Activated CD4-positive, alpha-beta memory T cell treated with anti-CD3 and anti-CD28 coated beads, Interleukin-2, amount 10 ng/mL, durations not matched to agents 7 days and 5 days (primary cell): ENCODE measurements at regions of chr11 and their contacts with region 1.

Region 1: DNA sequence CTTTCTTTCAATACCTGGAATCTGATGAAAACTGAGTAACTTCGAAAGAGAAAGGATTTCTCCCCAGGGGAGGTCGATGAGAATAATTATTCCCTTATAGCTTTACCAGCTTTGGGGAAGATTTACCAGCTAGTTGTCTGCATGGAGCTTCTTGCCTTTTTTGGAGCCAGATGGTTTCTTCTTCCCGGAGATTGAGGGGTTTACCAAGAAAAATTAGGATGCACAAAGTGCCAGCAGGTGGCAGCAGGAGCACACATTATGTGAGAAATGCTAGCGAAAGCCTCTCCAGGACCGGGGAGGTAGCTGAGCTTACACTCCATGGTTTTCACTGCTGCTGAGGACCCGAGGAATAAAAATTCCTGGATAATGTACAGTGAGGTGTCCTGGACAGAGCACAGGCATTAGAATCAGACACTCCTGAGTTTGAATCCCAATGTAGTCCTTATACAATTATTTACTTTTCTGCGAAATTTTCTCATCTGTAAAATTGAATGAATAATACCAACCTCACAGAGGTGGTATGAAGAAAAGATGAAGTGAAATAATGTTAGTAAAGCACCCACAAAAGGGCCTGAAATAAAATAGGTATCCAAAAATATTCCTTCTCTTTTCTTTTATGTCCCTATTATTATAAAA is 46.0 kb upstream of the PARVA start:
- DNase-seq: peak; percentile 76
- H3K4me3 Mint-ChIP-seq: no peak overlapping the region
- H3K27ac Mint-ChIP-seq: no peak overlapping the region
- H3K4me1 Mint-ChIP-seq: no peaks in the 10 kb centered on the region
- H3K27me3 Mint-ChIP-seq: no peaks in the 10 kb centered on the region

Region 2: GRCh38 chr11:12306830-12307229 is 24.5 kb before region 1 on chr11:
- CTCF ChIA-PET with region 1: no interaction called
- POLR2A ChIA-PET with region 1: no interaction called
- DNase-seq: no peak
- H3K4me3 Mint-ChIP-seq: no peak overlapping the region
- H3K27ac Mint-ChIP-seq: no peak overlapping the region
- H3K4me1 Mint-ChIP-seq: no peaks in the 10 kb centered on the region
- H3K27me3 Mint-ChIP-seq: peaks cover 2% of the 10 kb centered on the region

Region 3: GRCh38 chr11:12318791-12319438 is 12.4 kb before region 1 on chr11:
- CTCF ChIA-PET with region 1: interaction called, 18 read pairs
- POLR2A ChIA-PET with region 1: no interaction called
- DNase-seq: no peak
- H3K4me3 Mint-ChIP-seq: no peak overlapping the region
- H3K27ac Mint-ChIP-seq: no peak overlapping the region
- H3K4me1 Mint-ChIP-seq: peaks cover 16% of the 10 kb centered on the region
- H3K27me3 Mint-ChIP-seq: no peaks in the 10 kb centered on the region

Region 4: DNA sequence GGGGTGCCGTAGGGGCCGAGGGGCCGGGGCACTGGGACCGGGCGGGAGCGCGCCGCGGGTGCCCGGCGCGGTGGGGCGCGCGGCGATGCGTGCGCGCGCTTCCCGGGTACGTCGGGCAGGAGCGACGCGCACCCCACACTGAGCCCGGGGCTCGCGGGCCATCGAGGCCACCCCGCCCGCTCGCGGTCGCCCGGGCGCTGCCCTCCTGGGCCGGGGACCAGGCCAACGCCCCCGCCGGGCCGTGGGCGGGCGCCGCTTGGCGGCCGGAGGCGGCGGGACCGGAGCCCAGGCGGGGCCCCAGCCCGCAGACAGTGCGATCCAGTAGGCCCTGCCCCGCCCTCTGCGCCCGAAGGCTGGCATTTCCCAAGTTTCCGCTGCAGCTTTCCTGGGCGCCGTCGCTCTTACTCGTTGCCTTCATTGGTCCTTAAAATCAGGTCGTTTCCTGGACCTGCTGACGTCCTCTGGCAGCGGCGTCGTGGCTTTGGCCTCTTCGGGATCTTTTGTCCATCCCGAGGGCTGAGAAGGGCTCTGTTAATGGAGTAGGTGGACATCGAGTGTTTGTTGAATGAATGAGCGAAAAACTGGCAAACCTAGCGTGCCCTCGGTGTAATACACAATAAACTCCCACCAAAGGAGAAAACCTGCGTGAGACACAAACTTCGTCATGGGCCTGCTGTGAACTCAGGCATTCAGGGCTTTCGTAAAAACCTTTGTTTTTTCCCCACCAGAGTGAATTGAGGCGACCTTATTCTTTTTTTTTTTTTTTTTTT is 46.7 kb after region 1 on chr11:
- CTCF ChIA-PET with region 1: interaction called, 15 read pairs
- POLR2A ChIA-PET with region 1: interaction called, 3 read pairs
- DNase-seq: no peak
- H3K4me3 Mint-ChIP-seq: peak overlapping the region; percentile 60
- H3K27ac Mint-ChIP-seq: no peak overlapping the region
- H3K4me1 Mint-ChIP-seq: peaks cover 11% of the 10 kb centered on the region
- H3K27me3 Mint-ChIP-seq: peaks cover 42% of the 10 kb centered on the region

Region 5: GRCh38 chr11:12599408-12600143 is 268.2 kb after region 1 on chr11:
- CTCF ChIA-PET with region 1: interaction called, 11 read pairs
- POLR2A ChIA-PET with region 1: no interaction called
- DNase-seq: peak; percentile 50
- H3K4me3 Mint-ChIP-seq: no peak overlapping the region
- H3K27ac Mint-ChIP-seq: no peak overlapping the region
- H3K4me1 Mint-ChIP-seq: peaks cover 11% of the 10 kb centered on the region
- H3K27me3 Mint-ChIP-seq: peaks cover 24% of the 10 kb centered on the region

Region 6: DNA sequence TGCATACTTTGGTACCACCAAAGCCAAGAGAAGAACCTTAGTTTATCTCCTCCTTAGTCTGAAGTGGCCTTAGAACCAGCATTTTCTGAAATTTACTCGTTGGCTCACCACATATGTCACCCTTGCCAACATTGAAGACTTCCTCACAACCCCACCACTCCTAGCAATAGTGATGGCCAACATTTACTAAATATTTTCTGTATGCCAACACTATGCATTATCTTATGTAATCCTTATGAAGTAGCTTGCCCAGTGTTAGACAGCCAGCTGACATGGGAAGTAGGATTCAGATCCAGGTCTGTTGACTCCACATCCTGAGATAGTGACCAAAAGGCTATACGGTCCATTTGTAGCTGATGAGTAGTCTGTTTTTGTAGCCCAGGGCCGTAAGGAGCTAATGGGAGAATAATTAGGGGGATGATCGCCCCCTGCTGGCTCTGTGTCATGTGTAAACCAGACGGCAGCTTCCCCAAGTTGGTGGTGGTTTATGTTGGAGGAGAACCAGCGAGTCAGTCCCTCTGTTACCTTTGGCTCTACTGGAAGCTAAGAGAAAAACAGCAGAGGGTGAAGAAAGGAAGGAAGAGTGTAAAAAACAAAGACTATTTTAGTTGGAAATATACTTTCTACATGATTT is 557.3 kb after region 1 on chr11:
- CTCF ChIA-PET with region 1: interaction called, 76 read pairs
- POLR2A ChIA-PET with region 1: no interaction called
- DNase-seq: peak; percentile 71
- H3K4me3 Mint-ChIP-seq: no peak overlapping the region
- H3K27ac Mint-ChIP-seq: no peak overlapping the region
- H3K4me1 Mint-ChIP-seq: no peaks in the 10 kb centered on the region
- H3K27me3 Mint-ChIP-seq: no peaks in the 10 kb centered on the region

Region 7: DNA sequence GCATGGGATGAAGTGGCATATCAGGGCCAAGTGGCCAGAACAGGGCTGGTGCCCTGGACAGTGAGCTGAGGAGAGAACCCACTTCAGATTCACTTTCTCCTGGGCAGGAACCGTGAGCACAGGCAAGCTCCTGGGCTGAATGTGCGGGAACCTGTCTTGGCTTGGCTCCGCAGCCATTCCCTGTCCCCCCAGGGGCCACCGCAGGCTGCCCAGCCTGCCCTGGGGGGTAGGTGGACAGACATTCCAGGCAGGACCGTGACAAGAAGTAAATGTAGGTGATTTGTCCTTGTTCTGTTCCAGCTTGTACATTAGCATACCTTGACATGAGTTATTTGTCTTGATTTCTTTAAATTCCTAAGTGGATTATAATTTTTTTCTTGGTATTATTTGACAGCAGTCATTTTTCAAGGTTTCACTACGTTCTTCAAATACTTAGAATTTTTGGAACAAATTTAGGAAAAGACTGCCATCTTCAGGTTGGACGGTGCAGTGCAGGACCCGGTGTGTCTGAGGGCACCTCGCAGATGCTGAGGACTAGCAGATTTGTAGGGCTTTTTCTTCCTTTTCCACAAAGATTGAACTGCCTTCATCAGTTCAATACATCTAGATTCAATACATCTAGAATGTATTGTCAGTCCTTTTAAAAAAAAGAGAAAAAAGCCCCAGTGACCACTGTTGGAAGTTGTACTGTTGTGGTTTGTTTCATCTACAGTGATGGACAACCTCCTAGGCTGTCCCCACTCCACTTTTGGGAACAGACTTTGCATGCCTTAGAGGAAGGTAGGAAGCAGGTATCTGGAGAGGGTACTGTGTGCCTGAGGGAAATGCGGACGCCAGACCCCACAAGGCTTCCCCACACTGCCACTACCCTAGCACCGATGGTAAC is 562.7 kb after region 1 on chr11:
- CTCF ChIA-PET with region 1: interaction called, 76 read pairs
- POLR2A ChIA-PET with region 1: no interaction called
- DNase-seq: peak; percentile 61
- H3K4me3 Mint-ChIP-seq: no peak overlapping the region
- H3K27ac Mint-ChIP-seq: no peak overlapping the region
- H3K4me1 Mint-ChIP-seq: no peaks in the 10 kb centered on the region
- H3K27me3 Mint-ChIP-seq: peaks cover 15% of the 10 kb centered on the region